ENCODE measurements at regions of chr12 and their contacts with region 1.

Region 1: GRCh38 chr12:68633614-68634529 is 23.2 kb downstream of the RAP1B start:
- DNase-seq: no peak
- ATAC-seq: peak; percentile 40
- H3K4me3 ChIP-seq: peak overlapping the region; percentile 15; the same call in 1 of the 2 replicates
- H3K27ac ChIP-seq: peak overlapping the region; percentile 41
- H3K4me1 ChIP-seq: peaks cover 55% of the 10 kb centered on the region
- H3K27me3 ChIP-seq: no peaks in the 10 kb centered on the region
- CTCF ChIP-seq: no peak
- EP300 ChIP-seq: peak in 1 of 2 experiments; percentile 38; a peak in 1 of 4 replicates
- POLR2A ChIP-seq: no peak
- RAD21 ChIP-seq: no peak

Region 2: DNA sequence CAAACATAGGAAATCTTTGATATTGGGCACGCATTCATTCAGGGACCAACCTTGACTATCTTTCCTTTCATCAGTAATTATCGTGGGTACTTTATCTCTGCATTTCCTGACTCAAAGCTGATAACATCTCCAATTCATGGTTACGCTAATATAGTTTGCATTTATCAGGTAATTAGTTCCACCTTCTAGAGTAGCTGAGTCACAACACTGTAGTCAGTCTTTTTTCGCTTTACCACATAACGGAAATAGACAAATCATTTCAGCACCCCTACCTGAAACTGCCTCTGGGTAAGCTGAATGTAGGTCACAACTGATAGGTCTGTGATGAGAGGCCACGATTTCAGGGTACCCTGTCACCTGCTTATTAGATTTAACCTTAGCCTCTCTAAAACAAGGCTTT is 343.7 kb before region 1 on chr12:
- CTCF ChIA-PET with region 1: no interaction called
- POLR2A ChIA-PET with region 1: no interaction called
- RAD21 ChIA-PET with region 1: no interaction called
- SMC1A ChIA-PET with region 1: no interaction called
- in situ Hi-C with region 1: no loop called
- intact Hi-C with region 1: no loop called
- DNase-seq: peak; percentile 93
- ATAC-seq: peak; percentile 100
- H3K4me3 ChIP-seq: no peak overlapping the region
- H3K27ac ChIP-seq: no peak overlapping the region
- H3K4me1 ChIP-seq: peaks cover 7% of the 10 kb centered on the region
- H3K27me3 ChIP-seq: no peaks in the 10 kb centered on the region
- CTCF ChIP-seq: no peak
- EP300 ChIP-seq: peak; percentile 94 to 96
- POLR2A ChIP-seq: no peak
- RAD21 ChIP-seq: no peak

Region 3: GRCh38 chr12:68617160-68617926 is 16.5 kb before region 1 on chr12:
- CTCF ChIA-PET with region 1: interaction called, 7 read pairs
- POLR2A ChIA-PET with region 1: interaction called, 8 read pairs
- RAD21 ChIA-PET with region 1: interaction called, 24 read pairs
- SMC1A ChIA-PET with region 1: interaction called, 26 read pairs
- in situ Hi-C with region 1: no loop called
- intact Hi-C with region 1: loop called (anchors 2 kb)
- DNase-seq: no peak
- ATAC-seq: no peak
- H3K4me3 ChIP-seq: no peak overlapping the region
- H3K27ac ChIP-seq: no peak overlapping the region
- H3K4me1 ChIP-seq: peaks cover 23% of the 10 kb centered on the region
- H3K27me3 ChIP-seq: no peaks in the 10 kb centered on the region
- CTCF ChIP-seq: no peak
- EP300 ChIP-seq: no peak
- POLR2A ChIP-seq: no peak
- RAD21 ChIP-seq: no peak